AG04449 (cell line): ENCODE measurements at regions of chr14 and their contacts with region 1.

Region 1: DNA sequence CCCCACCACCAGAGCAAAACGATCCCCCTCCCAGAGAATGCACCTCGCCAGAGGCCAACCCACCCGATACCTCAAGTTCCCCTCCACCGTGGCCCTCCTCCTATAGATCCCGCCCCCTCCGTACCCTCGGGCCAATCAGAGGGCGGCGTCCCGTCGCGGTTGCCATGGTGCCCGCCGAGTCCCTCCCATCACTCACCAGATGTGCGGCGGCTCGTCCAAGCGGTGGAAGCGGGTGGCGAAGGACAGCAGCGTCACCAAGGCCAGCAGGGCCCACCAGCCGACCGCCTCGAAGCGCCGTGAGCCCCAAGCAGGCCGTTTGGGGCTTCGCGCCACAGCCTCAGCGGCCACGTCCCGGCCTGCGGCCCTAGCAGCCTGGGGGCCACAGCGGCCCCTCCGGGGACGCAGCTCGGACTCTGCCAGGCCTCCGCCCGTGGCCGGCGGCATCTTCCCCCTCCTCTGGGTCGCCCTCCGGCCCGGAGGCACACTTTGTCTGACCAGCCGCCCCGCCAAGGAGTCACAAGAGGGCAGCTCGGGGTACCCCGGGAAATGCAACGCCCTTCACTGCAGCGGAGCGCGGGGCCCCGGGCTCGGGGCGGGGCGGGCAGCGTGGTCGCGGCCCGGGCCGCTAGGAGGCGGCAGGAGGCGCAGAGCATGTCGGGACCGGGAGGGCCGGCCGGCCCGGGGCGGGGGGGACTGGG is at the start of gene POMT2:
- DNase-seq: no peak
- H3K4me3 ChIP-seq: peak within 1 kb of the TSS; percentile 87
- CTCF ChIP-seq: peak; percentile 58

Region 2: GRCh38 chr14:77306851-77307765 is 13.3 kb before region 1 on chr14:
- CTCF ChIA-PET with region 1: interaction called, 416 read pairs
- POLR2A ChIA-PET with region 1: interaction called, 12 read pairs
- DNase-seq: no peak
- H3K4me3 ChIP-seq: no peak overlapping the region; the same call in 1 of the 2 replicates
- CTCF ChIP-seq: no peak

Region 3: GRCh38 chr14:77369285-77369684 is 48.9 kb after region 1 on chr14:
- CTCF ChIA-PET with region 1: no interaction called
- POLR2A ChIA-PET with region 1: no interaction called
- DNase-seq: no peak
- H3K4me3 ChIP-seq: no peak overlapping the region
- CTCF ChIP-seq: no peak

Region 4: GRCh38 chr14:77565289-77565993 is 245.1 kb after region 1 on chr14:
- CTCF ChIA-PET with region 1: no interaction called
- POLR2A ChIA-PET with region 1: no interaction called
- DNase-seq: no peak
- H3K4me3 ChIP-seq: no peak overlapping the region
- CTCF ChIP-seq: no peak